H1 (cell line): ENCODE measurements at regions of chr5 and their contacts with region 1.

Region 1: DNA sequence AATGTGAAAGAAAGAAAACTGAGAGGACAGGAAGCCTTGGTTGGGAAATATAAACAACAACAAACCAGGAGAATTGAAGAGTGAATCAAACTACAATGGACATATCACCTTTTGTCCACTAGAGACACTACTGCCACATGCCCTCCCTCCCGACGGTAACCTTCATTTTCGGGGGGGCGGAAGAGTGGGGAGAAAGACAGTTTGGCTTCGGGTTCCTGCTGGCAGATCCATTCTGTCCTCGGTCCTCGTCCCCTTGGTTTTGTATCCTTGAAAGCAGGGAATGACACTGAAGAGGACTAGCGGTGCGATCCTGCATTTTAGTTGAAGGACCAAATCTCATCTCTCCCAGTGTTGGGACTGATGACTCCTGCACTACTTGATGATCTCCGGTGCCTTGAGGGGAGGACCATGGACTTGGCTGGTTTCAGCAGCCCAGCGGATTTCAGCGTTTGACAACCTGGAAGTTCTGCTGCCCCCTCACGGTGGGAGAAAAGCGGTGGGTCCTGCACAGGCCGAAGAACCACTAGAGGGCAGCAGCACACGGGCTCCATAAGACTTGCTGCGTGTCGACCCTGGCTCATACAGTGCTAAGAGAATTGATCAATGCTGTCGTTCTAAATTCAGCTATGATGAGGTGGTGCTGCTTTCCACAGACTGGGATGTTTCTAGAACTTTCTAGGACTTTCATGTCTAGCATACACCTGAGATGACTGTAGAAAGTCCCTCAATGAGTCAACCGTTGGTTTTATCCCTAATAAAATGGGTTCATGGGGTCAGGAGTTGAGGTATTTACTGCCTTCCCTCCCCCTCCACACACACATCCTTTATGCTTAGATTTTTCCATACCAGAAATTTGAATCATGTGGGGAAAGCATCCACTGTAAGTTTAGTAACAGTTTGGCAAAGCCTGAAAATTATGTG is 15.1 kb upstream of the ZNF131 start:
- DNase-seq: peak; percentile 91 to 93
- H3K4me3 ChIP-seq: peak overlapping the region in 1 of 4 experiments; percentile 39; a peak in 1 of 8 replicates
- H3K27ac ChIP-seq: no peak overlapping the region
- H3K4me1 ChIP-seq: no peaks in the 10 kb centered on the region
- H3K27me3 ChIP-seq: no peaks in the 10 kb centered on the region
- CTCF ChIP-seq: peak; percentile 98 to 100 (median 100)
- EP300 ChIP-seq: no peak
- POLR2A ChIP-seq: no peak
- RAD21 ChIP-seq: peak; percentile 80 to 86

Region 2: DNA sequence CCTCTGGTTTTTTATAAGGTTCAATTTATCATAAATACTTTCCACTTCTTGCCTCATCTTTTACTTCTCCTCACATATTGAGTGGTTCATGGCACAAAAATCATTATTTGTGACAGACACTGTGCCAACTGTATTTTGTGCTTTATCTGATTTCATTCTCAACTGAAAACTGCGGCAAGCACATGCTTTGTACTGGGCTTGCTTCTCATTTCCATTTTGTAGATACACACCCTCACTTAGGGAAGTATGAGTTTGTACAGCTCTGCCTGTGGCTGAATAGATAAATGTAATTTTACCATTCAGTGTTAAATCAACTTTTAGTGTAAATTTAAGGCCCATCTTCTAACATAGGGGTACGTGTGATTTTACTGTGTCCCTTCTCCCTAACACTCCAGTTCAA is 149.1 kb before region 1 on chr5:
- CTCF ChIA-PET with region 1: no interaction called
- POLR2A ChIA-PET with region 1: no interaction called
- DNase-seq: no peak
- H3K4me3 ChIP-seq: no peak overlapping the region
- H3K27ac ChIP-seq: no peak overlapping the region
- H3K4me1 ChIP-seq: no peaks in the 10 kb centered on the region
- H3K27me3 ChIP-seq: no peaks in the 10 kb centered on the region
- CTCF ChIP-seq: no peak
- EP300 ChIP-seq: no peak
- POLR2A ChIP-seq: no peak
- RAD21 ChIP-seq: no peak

Region 3: GRCh38 chr5:43078986-43079355 is 26.7 kb before region 1 on chr5:
- CTCF ChIA-PET with region 1: interaction called, 18 read pairs
- POLR2A ChIA-PET with region 1: no interaction called
- DNase-seq: no peak
- H3K4me3 ChIP-seq: no peak overlapping the region
- H3K27ac ChIP-seq: no peak overlapping the region
- H3K4me1 ChIP-seq: no peaks in the 10 kb centered on the region
- H3K27me3 ChIP-seq: no peaks in the 10 kb centered on the region
- CTCF ChIP-seq: no peak
- EP300 ChIP-seq: no peak
- POLR2A ChIP-seq: no peak
- RAD21 ChIP-seq: no peak

Region 4: GRCh38 chr5:43120720-43121564 is 15.3 kb after region 1 on chr5 and contains the start of gene ZNF131:
- CTCF ChIA-PET with region 1: interaction called, 103 read pairs
- POLR2A ChIA-PET with region 1: interaction called, 7 read pairs
- DNase-seq: peak; percentile 89 to 96
- H3K4me3 ChIP-seq: peak within 1 kb of the TSS; percentile 76 to 99 (median 92)
- H3K27ac ChIP-seq: peak within 1 kb of the TSS; percentile 97
- H3K4me1 ChIP-seq: no peaks in the 10 kb centered on the region; a peak in 2 of 7 replicates
- H3K27me3 ChIP-seq: 0 out of 7 replicates have a peak, but pooled peaks cover 0 to 1% (median 0%) of the 10 kb centered on the region in 4 experiments
- CTCF ChIP-seq: no peak
- EP300 ChIP-seq: no peak
- POLR2A ChIP-seq: peak; percentile 80 to 97
- RAD21 ChIP-seq: no peak
- total RNA-seq, gene ZNF131: 34.9 and 36.3 TPM in 2 replicates

Region 5: GRCh38 chr5:43227655-43228054 is 122.0 kb after region 1 on chr5:
- CTCF ChIA-PET with region 1: interaction called, 10 read pairs
- POLR2A ChIA-PET with region 1: no interaction called
- DNase-seq: no peak
- H3K4me3 ChIP-seq: no peak overlapping the region
- H3K27ac ChIP-seq: no peak overlapping the region
- H3K4me1 ChIP-seq: no peaks in the 10 kb centered on the region
- H3K27me3 ChIP-seq: no peaks in the 10 kb centered on the region
- CTCF ChIP-seq: peak in 1 of 3 experiments; percentile 34; a peak in 2 of 4 replicates
- EP300 ChIP-seq: no peak
- POLR2A ChIP-seq: no peak
- RAD21 ChIP-seq: peak; percentile 54 to 57